Activated CD4-positive, alpha-beta memory T cell treated with anti-CD3 and anti-CD28 coated beads, Interleukin-2, amount 10 ng/mL, durations not matched to agents 7 days and 5 days (primary cell): ENCODE measurements at regions of chr20 and their contacts with region 1.

Region 1: GRCh38 chr20:23050847-23051631 is 1.6 kb upstream of the THBD start:
- DNase-seq: peak; percentile 62
- H3K4me3 Mint-ChIP-seq: no peak overlapping the region
- H3K27ac Mint-ChIP-seq: no peak overlapping the region
- H3K4me1 Mint-ChIP-seq: peaks cover 9% of the 10 kb centered on the region
- H3K27me3 Mint-ChIP-seq: peaks cover 60% of the 10 kb centered on the region

Region 2: DNA sequence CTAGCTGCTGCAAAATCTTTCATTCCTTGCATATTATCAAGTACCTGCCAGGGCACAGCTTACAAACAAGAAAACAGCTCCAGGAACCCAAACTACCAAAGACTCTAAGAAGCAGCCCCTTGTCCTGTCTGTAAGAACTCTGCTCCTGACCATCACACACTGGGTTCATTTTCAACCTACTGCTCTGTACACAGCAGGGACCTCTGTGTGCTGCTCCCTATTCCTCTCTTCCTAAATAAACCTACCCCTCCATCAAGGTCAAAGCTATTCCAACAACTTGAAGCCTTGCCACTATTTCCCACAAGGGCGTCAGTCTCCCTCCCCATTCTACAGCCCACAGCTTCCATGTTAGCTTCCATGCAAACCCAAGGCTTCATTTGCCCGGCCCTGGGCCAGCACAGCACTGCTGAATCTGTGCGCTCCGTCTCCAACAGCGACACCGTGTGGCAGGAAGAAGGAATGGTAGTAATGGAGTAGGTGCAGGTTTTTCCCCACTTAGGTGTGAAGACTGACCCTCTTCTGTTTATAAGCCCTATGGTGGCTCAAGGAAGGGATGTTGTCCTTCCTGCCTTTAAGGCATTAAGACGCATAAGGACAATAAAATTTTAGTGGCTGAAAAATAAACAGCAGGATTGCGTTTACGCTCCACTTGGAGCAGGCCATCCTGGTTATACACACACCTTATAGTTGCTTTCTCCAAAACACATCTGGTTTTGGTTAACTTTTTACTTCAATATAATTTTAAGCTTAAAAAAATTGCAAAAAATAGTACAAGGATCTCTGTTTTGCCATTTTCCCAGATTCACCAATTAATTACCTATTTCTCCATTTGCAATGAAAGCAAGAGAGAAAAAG is 184.4 kb after region 1 on chr20:
- CTCF ChIA-PET with region 1: interaction called, 13 read pairs
- POLR2A ChIA-PET with region 1: interaction called, 3 read pairs
- DNase-seq: peak; percentile 55
- H3K4me3 Mint-ChIP-seq: no peak overlapping the region
- H3K27ac Mint-ChIP-seq: no peak overlapping the region
- H3K4me1 Mint-ChIP-seq: no peaks in the 10 kb centered on the region
- H3K27me3 Mint-ChIP-seq: peaks cover 15% of the 10 kb centered on the region